Cardiac septum (tissue), 1 donor: ENCODE measurements at regions of chr11 and their contacts with region 1.

Region 1: DNA sequence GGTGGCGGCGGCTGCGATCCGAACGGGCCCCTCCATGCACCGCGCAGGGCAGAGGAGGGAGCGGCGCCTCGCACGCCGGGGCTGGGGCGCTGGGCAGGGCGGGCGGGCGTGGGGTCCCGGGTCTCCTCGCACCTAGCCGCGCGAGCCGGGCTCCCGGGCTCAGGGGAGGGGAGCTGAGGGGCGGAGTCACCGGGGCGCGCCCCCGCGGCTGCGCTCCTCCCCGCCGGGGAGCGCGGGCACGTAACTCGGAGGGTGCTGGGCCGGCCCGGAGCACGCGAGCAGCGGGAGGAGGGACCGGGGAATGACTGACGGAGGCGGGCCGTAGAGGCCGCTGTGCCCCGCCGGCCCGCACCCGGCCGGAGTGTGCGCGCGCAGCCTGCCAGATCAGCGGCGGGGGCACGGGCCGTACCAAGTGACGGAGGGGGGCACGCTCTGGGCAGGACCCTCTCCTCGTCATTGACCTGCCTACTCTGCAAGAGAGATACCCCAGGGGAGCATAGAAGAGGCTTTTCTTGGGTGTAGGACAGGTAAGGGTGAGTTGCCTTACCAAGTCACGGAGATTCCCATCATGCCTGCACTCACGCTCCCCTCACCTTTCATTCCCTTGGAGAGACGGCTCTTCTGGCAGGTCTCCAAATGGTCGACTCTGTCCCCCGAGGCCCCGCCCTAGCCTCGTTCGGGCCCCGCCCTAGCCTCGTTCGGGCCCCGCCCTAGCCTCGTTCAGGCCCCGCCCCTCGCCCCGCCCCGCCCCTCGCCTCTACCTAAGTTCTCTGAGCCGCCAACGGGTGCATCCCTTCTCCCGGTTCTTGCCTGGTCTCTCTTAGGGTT is at the start of gene CDON:
- DNase-seq: peak; percentile 92
- total RNA-seq, gene CDON: 4.4 TPM

Region 2: GRCh38 chr11:125941619-125942611 is 121.0 kb before region 1 on chr11:
- intact Hi-C with region 1: loop called (anchors 5 kb)
- DNase-seq: peak; percentile 71

Region 3: DNA sequence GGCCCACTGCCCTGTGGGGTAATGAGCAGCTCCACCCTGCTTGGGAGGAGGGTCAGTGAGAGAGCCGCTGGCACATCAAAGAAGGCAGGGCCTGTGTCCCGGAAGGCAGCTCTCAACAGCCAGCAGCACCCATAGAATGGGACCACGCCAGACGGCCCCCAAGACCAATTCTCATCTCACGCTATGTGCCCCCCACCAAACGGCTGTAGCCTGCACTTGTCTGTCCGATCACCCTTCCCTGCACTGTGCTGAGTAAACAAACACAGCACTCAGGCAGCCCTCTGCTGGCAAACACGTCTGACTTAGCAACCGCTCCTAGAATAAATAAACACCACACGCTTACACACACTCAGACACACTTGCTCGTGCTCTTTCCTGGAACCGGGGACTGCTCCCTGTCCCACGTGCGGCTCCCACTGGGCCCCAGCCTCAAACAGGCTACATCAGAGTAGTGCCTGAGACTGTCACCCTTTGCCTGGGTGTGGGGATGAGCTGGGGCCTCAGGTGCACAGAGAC is 53.0 kb after region 1 on chr11:
- intact Hi-C with region 1: loop called (anchors 2 kb)
- DNase-seq: no peak

Region 4: DNA sequence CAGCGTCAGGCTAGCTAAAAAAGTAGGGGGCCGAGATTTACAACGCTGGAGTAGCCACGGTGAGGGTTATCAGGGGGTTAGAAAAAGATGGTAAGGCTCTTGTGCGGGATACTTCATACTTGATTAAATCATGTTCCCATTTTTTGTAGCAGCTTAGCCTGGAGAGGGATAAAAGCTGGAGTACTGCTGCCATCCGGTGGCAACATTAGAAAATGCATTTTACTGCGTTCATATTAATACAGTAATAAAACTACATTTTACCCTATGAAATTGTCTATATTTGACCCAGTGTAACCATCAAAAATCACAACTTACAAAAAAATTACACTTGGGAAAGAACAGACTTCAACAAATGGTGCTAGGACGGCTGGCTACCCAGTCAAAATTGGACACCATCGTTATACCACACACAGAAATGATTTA is 131.2 kb after region 1 on chr11:
- intact Hi-C with region 1: loop called (anchors 5 kb)
- DNase-seq: no peak

Region 5: DNA sequence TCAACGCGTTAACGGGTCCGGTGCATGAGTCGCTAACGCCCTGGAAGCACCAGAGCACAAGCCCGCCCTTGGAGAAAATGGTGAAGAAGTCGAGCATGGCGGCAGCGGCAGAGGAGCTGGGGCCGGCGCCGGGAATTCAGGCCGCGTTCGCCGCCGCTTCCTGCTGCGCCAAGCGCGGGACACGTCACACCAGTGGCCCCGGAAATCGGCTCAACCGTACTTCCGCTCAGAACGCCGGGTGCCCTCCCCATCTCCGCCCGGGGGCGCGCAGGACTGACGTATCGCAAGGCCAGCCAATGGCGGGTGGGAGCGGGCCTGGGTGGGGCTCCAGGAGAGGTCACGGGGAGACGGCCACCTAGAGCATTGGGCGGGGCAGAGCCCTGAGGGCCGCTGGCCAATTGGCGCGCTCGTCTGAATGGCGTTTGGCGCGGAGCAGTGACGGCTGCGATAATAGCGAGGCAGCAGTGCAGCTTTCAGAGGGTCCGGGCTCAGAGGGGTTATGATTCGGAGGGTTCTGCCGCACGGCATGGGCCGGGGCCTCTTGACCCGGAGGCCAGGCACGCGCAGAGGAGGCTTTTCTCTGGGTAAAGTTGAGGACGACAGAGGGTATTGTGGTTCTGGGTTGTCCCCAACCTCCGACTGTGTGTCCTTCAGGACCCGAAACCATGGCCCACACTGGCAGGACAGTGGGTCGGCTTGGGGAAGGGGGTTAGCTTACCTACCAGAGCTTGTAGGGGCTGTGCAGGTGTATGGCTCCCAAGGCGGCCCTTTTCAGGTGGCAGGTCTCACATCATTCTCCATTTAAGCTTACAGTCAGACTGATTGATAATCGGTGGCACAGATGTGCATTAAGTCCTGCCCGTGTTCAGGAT is 206.1 kb after region 1 on chr11 and contains the starts of genes FOXRED1 and SRPRA:
- intact Hi-C with region 1: loop called (anchors 10 kb)
- DNase-seq: peak; percentile 100
- total RNA-seq, gene FOXRED1: 23.0 TPM
- total RNA-seq, gene SRPRA: 77.4 TPM